K562 (cell line): ENCODE measurements at regions of chr14 and their contacts with region 1.

Region 1: GRCh38 chr14:105490572-105491366 is at the start of gene TEDC1:
- DNase-seq: peak; percentile 84 to 98 (median 91)
- ATAC-seq: peak; percentile 90
- H3K4me3 ChIP-seq: peak within 1 kb of the TSS; percentile 83
- H3K27ac ChIP-seq: peak within 1 kb of the TSS; percentile 87
- H3K4me1 ChIP-seq: peaks cover 1 to 85% of the 10 kb centered on the region in 2 experiments
- H3K27me3 ChIP-seq: no peaks in the 10 kb centered on the region
- CTCF ChIP-seq: peak; percentile 59 to 86 (median 77); a peak in 5 of 6 replicates
- EP300 ChIP-seq: no peak
- POLR2A ChIP-seq: no peak
- RAD21 ChIP-seq: peak; percentile 49 to 71
- polyA plus RNA-seq, gene TEDC1: 0.21 to 0.25 TPM

Region 2: GRCh38 chr14:105300792-105301533 is 189.8 kb before region 1 on chr14 and contains the start of gene BRF1:
- CTCF ChIA-PET with region 1: no interaction called
- POLR2A ChIA-PET with region 1: no interaction called
- in situ Hi-C with region 1: no loop called
- intact Hi-C with region 1: loop called (anchors 2 kb)
- DNase-seq: peak; percentile 96 to 97 (median 97)
- ATAC-seq: peak; percentile 90
- H3K4me3 ChIP-seq: peak within 1 kb of the TSS; percentile 83
- H3K27ac ChIP-seq: peak within 1 kb of the TSS; percentile 91
- H3K4me1 ChIP-seq: peaks cover 4 to 29% of the 10 kb centered on the region in 2 experiments; a peak in 4 of 5 replicates
- H3K27me3 ChIP-seq: no peaks in the 10 kb centered on the region
- CTCF ChIP-seq: no peak
- EP300 ChIP-seq: no peak
- POLR2A ChIP-seq: peak; percentile 80
- RAD21 ChIP-seq: no peak
- polyA plus RNA-seq, gene BRF1: 0.14 to 0.17 TPM

Region 3: GRCh38 chr14:105369653-105370040 is 121.1 kb before region 1 on chr14:
- CTCF ChIA-PET with region 1: interaction called, 16 read pairs
- POLR2A ChIA-PET with region 1: no interaction called
- in situ Hi-C with region 1: loop called (anchors 5 kb)
- intact Hi-C with region 1: loop called (anchors 2 kb)
- DNase-seq: no peak
- ATAC-seq: no peak
- H3K4me3 ChIP-seq: no peak overlapping the region
- H3K27ac ChIP-seq: no peak overlapping the region
- H3K4me1 ChIP-seq: peaks cover 0 to 20% of the 10 kb centered on the region in 2 experiments; a peak in 3 of 5 replicates
- H3K27me3 ChIP-seq: no peaks in the 10 kb centered on the region
- CTCF ChIP-seq: no peak
- EP300 ChIP-seq: no peak
- POLR2A ChIP-seq: no peak
- RAD21 ChIP-seq: no peak

Region 4: DNA sequence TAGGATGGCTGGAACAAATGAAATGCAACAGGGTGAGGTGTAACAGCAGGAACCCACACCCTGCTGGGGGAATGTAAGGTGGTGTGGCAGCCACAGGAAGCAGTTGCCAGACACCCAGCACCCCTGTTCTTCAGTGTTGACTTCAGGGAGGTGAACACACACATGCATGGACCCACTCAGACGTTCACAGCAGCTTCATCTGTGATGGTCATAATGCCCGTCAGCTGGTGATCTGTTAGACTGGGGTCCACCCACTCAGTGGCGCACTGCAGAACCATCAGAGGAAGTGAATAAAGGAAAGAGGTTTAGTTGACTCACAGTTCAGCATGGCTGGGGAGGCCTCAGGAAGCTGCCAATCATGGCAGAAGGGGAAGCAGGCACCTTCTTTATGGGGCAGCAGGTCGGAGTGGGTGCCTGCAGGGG is 115.1 kb before region 1 on chr14:
- CTCF ChIA-PET with region 1: interaction called, 16 read pairs
- POLR2A ChIA-PET with region 1: no interaction called
- in situ Hi-C with region 1: loop called (anchors 5 kb)
- intact Hi-C with region 1: loop called (anchors 2 kb)
- DNase-seq: no peak
- ATAC-seq: no peak
- H3K4me3 ChIP-seq: no peak overlapping the region
- H3K27ac ChIP-seq: no peak overlapping the region
- H3K4me1 ChIP-seq: peaks cover 8 to 29% of the 10 kb centered on the region in 2 experiments; a peak in 4 of 5 replicates
- H3K27me3 ChIP-seq: no peaks in the 10 kb centered on the region
- CTCF ChIP-seq: no peak
- EP300 ChIP-seq: no peak
- POLR2A ChIP-seq: no peak
- RAD21 ChIP-seq: no peak

Region 5: GRCh38 chr14:105448706-105449111 is 42.1 kb before region 1 on chr14:
- CTCF ChIA-PET with region 1: no interaction called
- POLR2A ChIA-PET with region 1: no interaction called
- in situ Hi-C with region 1: no loop called
- intact Hi-C with region 1: loop called (anchors 5 kb)
- DNase-seq: peak; percentile 66 to 73 (median 72)
- ATAC-seq: peak; percentile 99
- H3K4me3 ChIP-seq: no peak overlapping the region
- H3K27ac ChIP-seq: no peak overlapping the region
- H3K4me1 ChIP-seq: peaks cover 0 to 48% of the 10 kb centered on the region in 2 experiments; a peak in 2 of 5 replicates
- H3K27me3 ChIP-seq: no peaks in the 10 kb centered on the region
- CTCF ChIP-seq: peak; percentile 66 to 82 (median 67)
- EP300 ChIP-seq: no peak
- POLR2A ChIP-seq: no peak
- RAD21 ChIP-seq: peak; percentile 36 to 59; a peak in 3 of 4 replicates

Region 6: DNA sequence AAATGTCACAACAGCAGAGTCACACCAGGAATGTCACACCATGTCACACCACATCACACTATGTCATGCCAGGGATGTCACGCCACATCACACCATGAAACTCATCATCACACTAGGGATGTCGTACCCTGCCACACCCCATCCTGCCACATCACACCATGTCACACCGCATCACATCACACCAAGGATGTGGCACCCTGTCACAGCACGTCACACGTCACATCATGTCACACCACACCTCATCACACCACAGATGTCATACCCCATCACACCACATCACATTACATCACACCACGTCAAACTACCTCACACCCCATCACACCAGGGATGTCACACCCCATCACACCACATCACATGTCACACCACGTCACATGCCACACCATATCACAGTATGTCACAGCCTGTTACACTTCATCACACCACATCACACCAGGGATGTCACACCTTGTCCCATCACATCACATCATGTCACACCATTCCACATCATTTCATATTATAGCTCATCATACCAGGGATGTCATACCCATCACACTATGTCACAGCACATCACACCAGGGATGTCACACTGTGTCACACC is 126.5 kb after region 1 on chr14:
- CTCF ChIA-PET with region 1: no interaction called
- POLR2A ChIA-PET with region 1: no interaction called
- in situ Hi-C with region 1: no loop called
- intact Hi-C with region 1: no loop called
- DNase-seq: no peak
- ATAC-seq: no peak
- H3K4me3 ChIP-seq: no peak overlapping the region
- H3K27ac ChIP-seq: no peak overlapping the region
- H3K4me1 ChIP-seq: no peaks in the 10 kb centered on the region
- H3K27me3 ChIP-seq: no peaks in the 10 kb centered on the region
- CTCF ChIP-seq: no peak
- EP300 ChIP-seq: no peak
- POLR2A ChIP-seq: no peak
- RAD21 ChIP-seq: no peak

Region 7: DNA sequence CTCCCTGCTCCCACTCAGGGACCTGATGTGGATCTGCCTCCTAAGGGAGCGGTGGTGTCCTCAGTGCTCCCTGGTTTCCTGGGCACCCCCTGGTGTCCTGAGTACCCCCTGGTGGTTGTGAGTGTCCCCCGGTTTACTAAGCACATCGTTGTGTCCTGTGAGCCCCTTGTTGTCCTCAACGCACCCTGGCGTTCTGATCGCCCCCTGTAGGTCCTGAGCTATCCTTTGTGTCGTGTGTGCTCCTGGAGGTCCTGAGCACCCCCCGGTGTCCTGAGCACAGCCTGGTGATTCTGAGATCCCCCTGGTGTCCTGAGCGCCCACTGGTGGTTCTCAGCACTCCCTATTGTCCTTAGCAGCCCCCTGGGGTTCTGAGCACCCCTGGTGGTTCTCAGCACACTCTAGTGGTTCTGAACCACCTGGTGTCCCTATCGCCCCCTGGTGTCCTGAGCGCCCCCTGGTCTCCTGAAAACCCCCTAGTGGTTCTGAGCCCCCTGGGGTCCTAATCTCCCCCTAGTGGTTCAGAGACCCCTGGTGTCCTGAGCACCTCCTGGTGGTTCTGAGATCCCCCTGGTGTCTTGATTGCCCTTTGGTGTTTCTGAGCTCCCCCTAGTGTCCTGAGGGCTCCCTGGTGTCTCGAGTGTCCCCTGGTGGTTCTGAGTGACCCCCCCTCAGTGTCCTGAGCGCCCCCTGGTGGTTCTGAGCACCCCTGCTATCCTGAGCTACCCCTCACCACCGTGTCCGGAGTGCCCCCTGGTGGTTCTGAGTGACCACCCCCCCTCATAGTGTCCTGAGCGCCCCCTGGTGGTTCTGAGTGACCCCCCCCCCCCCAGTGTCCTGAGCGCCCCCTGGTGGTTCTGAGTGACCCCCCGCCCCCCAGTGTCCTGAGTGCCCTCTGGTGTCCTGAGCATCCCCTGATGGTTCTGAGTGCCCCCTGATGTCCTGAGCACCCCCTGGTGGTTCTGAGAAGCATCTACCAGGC is 650.8 kb after region 1 on chr14:
- CTCF ChIA-PET with region 1: no interaction called
- POLR2A ChIA-PET with region 1: no interaction called
- in situ Hi-C with region 1: no loop called
- intact Hi-C with region 1: no loop called
- DNase-seq: peak; percentile 13 to 22 (median 16)
- ATAC-seq: no peak
- H3K4me3 ChIP-seq: no peak overlapping the region
- H3K27ac ChIP-seq: no peak overlapping the region
- H3K4me1 ChIP-seq: no peaks in the 10 kb centered on the region
- H3K27me3 ChIP-seq: no peaks in the 10 kb centered on the region
- CTCF ChIP-seq: peak; percentile 38 to 94 (median 48); a peak in 5 of 6 replicates
- EP300 ChIP-seq: no peak
- POLR2A ChIP-seq: no peak
- RAD21 ChIP-seq: no peak